Activated T-helper 2 cell treated with anti-CD3 and anti-CD28 coated beads, Interferon-gamma antibody, Interleukin-2, Interleukin-4, amounts not matched to agents 10 μg/mL and 5 μg/mL and 100 μg/mL, durations not matched to agents 14 hours and 24 hours and 36 hours (primary cell): ENCODE measurements at regions of chr20 and their contacts with region 1.

Region 1: DNA sequence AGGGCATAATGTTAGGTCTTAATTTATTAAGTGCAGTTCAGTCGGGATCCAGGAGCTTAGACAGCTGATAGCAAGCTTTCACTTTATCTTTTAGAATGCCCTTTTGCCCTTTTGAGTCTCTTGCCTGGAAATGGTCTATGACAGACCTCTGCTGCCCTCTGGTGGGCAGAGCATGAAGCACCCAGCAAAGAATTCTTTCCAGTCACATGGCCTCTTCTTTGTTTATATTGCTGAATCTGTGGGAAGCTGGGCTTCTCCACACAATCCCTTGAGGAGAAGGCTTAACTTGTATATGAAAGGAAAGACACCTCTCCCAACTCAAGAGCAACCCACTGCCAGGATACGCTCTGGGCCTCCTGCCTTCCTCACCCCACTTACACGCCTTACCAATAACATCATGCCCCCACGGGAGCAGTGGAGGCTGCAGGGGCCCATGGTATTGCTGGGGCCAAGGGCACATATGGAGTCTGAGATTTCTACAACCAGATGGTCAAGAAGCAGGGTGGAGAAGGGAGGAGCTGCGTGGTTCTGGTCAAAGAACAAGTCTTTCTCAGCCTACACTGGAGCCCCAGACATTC is 20.4 kb downstream of the WFDC3 start:
- DNase-seq: peak; percentile 70
- H3K4me3 Mint-ChIP-seq: no peak overlapping the region
- H3K27ac Mint-ChIP-seq: no peak overlapping the region
- H3K4me1 Mint-ChIP-seq: peaks cover 4% of the 10 kb centered on the region
- H3K27me3 Mint-ChIP-seq: peaks cover 13% of the 10 kb centered on the region

Region 2: DNA sequence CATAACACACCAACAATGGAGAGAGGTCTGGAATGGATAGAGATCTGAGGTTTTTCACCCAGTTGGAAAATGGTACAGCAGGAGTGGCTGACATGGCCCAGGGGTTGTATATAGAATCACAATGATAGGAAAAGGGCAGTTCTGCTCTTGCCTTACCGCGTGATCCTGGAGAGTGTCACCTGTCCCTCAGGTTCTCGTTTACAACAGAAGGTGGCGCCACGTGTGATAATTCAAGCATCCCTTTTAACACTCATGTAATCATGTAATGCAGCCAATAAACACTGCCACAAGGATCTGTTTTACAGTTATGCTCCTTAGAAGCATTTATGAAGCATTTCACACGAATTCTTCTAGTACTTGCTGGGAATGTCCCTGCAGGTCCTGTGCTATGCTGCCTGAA is 314.6 kb before region 1 on chr20:
- intact Hi-C with region 1: loop called (anchors 1 kb)
- DNase-seq: no peak
- H3K4me3 Mint-ChIP-seq: no peak overlapping the region
- H3K27ac Mint-ChIP-seq: no peak overlapping the region
- H3K4me1 Mint-ChIP-seq: no peaks in the 10 kb centered on the region
- H3K27me3 Mint-ChIP-seq: peaks cover 11% of the 10 kb centered on the region

Region 3: GRCh38 chr20:45545754-45546453 is 225.4 kb before region 1 on chr20:
- intact Hi-C with region 1: loop called (anchors 2 kb)
- DNase-seq: no peak
- H3K4me3 Mint-ChIP-seq: no peak overlapping the region
- H3K27ac Mint-ChIP-seq: no peak overlapping the region
- H3K4me1 Mint-ChIP-seq: no peaks in the 10 kb centered on the region
- H3K27me3 Mint-ChIP-seq: peaks cover 22% of the 10 kb centered on the region

Region 4: GRCh38 chr20:45581702-45582101 is 189.6 kb before region 1 on chr20:
- intact Hi-C with region 1: no loop called
- DNase-seq: no peak
- H3K4me3 Mint-ChIP-seq: no peak overlapping the region
- H3K27ac Mint-ChIP-seq: no peak overlapping the region
- H3K4me1 Mint-ChIP-seq: no peaks in the 10 kb centered on the region
- H3K27me3 Mint-ChIP-seq: peaks cover 23% of the 10 kb centered on the region

Region 5: GRCh38 chr20:45592574-45593189 is 178.6 kb before region 1 on chr20:
- intact Hi-C with region 1: loop called (anchors 1 kb)
- DNase-seq: no peak
- H3K4me3 Mint-ChIP-seq: no peak overlapping the region
- H3K27ac Mint-ChIP-seq: no peak overlapping the region
- H3K4me1 Mint-ChIP-seq: no peaks in the 10 kb centered on the region
- H3K27me3 Mint-ChIP-seq: peaks cover 16% of the 10 kb centered on the region

Region 6: DNA sequence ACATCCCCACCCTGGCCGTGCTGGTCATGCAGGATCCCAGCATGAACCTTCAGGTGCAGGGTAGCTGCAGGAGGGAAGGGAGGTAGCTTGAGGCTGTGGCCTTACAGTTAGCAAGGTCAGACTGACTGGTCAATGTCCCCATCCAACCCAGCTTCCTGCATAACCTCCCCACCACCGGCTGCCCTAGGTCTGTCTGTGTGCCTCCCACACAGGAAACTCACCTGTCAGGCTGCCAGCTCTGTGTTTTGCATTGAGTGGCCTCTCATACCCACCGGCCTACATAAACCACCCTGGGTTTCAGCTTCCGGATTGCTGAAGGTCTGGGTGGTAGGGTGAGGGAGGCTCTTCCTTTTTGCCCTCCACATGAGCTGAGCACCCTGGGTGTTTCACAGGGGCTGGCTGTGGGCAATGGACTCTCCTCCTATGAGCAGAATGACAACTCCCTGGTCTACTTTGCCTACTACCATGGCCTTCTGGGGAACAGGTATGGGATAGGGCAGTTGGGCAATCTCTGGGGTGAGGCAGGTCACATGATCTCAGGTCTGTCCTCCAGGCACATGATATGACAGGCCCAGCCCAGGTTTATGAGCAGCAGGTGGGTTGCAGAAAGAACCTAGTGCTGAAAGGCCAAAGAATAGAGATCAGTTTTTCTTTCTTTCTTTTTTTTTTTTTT is 121.7 kb after region 1 on chr20:
- intact Hi-C with region 1: no loop called
- DNase-seq: no peak
- H3K4me3 Mint-ChIP-seq: peak overlapping the region; percentile 87
- H3K27ac Mint-ChIP-seq: no peak overlapping the region
- H3K4me1 Mint-ChIP-seq: peaks cover 25% of the 10 kb centered on the region
- H3K27me3 Mint-ChIP-seq: no peaks in the 10 kb centered on the region

Region 7: GRCh38 chr20:46255429-46256104 is 484.3 kb after region 1 on chr20:
- intact Hi-C with region 1: no loop called
- DNase-seq: no peak
- H3K4me3 Mint-ChIP-seq: no peak overlapping the region
- H3K27ac Mint-ChIP-seq: no peak overlapping the region
- H3K4me1 Mint-ChIP-seq: no peaks in the 10 kb centered on the region
- H3K27me3 Mint-ChIP-seq: peaks cover 23% of the 10 kb centered on the region